MCF 10A (cell line): ENCODE measurements at regions of chr20 and their contacts with region 1.

Region 1: DNA sequence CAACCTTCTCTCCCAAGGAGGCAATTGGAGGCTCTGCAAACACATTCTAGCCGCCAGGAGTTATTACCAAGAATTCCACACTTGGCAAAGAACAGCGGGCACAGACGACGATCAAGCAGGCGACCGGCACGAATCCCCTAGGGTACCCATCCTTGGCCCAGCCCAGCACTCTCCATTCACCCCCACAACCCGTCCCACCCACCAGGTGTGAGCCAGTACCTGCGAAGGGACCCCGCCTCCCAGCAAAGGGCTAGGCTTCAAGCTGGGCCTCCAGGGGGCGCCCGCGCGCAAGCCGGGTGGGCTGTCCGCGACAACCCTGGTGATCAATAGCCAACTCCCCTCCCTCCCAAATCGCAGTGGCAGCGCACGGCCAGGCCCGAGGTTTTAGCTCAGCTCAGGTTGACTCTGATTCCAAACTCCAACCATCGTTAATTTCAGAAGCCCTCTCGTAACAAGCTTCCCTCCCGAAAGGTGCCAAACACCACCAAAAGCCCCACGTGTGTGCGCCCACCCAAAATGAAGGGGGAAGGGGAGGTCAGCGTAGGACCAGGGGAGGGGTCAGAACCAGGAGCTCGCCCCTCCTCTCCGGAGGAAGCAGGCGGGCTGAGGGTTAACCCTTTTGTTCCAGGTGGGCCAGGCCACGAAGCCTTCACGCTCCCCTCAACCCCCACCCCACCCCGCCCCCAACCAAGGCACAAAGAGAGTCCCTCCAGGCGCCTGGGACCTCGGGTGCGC is 2.1 kb downstream of the SALL4 start:
- DNase-seq: peak; percentile 59
- H3K4me3 Mint-ChIP-seq: peak overlapping the region; percentile 63
- H3K27ac Mint-ChIP-seq: no peak overlapping the region
- H3K4me1 Mint-ChIP-seq: no peaks in the 10 kb centered on the region
- H3K27me3 Mint-ChIP-seq: no peaks in the 10 kb centered on the region
- CTCF ChIP-seq: peak; percentile 82

Region 2: GRCh38 chr20:51687062-51687461 is 113.2 kb before region 1 on chr20:
- CTCF ChIA-PET with region 1: no interaction called
- POLR2A ChIA-PET with region 1: no interaction called
- intact Hi-C with region 1: no loop called
- DNase-seq: peak; percentile 55
- H3K4me3 Mint-ChIP-seq: no peak overlapping the region
- H3K27ac Mint-ChIP-seq: peak overlapping the region; percentile 92
- H3K4me1 Mint-ChIP-seq: peaks cover 11% of the 10 kb centered on the region
- H3K27me3 Mint-ChIP-seq: no peaks in the 10 kb centered on the region
- CTCF ChIP-seq: no peak

Region 3: DNA sequence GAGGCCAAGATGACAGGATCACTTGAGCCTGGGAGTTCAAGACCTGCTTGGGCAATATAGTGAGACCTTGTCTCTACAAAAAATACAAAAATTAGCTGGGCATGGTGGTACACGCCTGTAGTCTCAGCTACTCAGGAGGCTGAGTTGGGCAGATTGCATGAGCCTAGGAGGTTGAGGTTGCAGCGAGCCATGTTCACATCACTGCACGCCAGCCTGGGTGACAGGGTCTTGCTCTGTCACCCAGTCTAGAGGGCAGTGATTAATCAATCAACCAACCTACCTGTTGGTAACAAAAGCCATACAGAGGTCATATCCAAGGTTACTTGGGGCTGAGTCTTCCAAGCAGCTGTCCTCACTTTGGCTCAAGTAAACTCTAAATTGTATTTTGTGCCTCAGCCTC is 24.0 kb before region 1 on chr20:
- CTCF ChIA-PET with region 1: interaction called, 13 read pairs
- POLR2A ChIA-PET with region 1: no interaction called
- intact Hi-C with region 1: no loop called
- DNase-seq: no peak
- H3K4me3 Mint-ChIP-seq: no peak overlapping the region
- H3K27ac Mint-ChIP-seq: no peak overlapping the region
- H3K4me1 Mint-ChIP-seq: no peaks in the 10 kb centered on the region
- H3K27me3 Mint-ChIP-seq: no peaks in the 10 kb centered on the region
- CTCF ChIP-seq: no peak

Region 4: DNA sequence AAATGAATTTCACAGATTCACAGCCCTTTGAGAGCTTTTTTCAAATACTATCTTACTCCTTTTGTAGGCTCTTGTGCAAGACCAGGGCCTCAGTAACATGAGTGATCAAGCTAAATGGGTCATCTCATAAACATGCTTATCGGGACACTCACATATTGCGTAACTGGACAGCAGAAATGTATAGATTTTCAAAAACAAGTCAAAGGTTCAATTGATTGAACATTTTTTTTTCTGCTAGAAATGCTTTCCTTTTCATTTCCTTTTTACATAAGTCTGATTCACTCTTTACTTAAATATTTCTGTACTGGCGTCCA is 10.8 kb after region 1 on chr20:
- CTCF ChIA-PET with region 1: interaction called, 28 read pairs
- POLR2A ChIA-PET with region 1: interaction called, 3 read pairs
- intact Hi-C with region 1: no loop called
- DNase-seq: peak; percentile 35
- H3K4me3 Mint-ChIP-seq: no peak overlapping the region
- H3K27ac Mint-ChIP-seq: no peak overlapping the region
- H3K4me1 Mint-ChIP-seq: peaks cover 4% of the 10 kb centered on the region
- H3K27me3 Mint-ChIP-seq: no peaks in the 10 kb centered on the region
- CTCF ChIP-seq: no peak

Region 5: DNA sequence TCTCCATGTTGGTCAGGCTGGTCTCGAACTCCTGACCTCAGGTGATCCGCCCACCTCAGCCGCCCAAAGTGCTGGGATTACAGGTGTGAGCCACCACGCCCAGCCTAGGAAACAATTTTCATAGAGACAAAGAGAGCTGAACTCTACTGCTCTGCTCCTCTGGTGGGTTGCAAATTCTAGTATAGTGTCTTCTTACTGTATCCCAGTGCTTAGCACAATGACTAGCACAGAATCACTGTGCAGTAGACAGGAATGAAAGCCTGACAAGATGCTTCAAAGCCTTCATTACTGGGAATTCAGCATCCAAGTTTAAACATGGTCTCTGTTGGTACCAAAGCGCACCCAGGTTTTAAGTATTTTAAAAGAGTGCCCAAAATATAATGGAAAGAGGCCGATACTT is 98.6 kb after region 1 on chr20:
- CTCF ChIA-PET with region 1: no interaction called
- POLR2A ChIA-PET with region 1: no interaction called
- intact Hi-C with region 1: no loop called
- DNase-seq: no peak
- H3K4me3 Mint-ChIP-seq: no peak overlapping the region
- H3K27ac Mint-ChIP-seq: no peak overlapping the region
- H3K4me1 Mint-ChIP-seq: no peaks in the 10 kb centered on the region
- H3K27me3 Mint-ChIP-seq: no peaks in the 10 kb centered on the region
- CTCF ChIP-seq: no peak

Region 6: GRCh38 chr20:52060794-52061714 is 260.8 kb after region 1 on chr20:
- CTCF ChIA-PET with region 1: interaction called, 34 read pairs
- POLR2A ChIA-PET with region 1: interaction called, 3 read pairs
- intact Hi-C with region 1: loop called (anchors 5 kb)
- DNase-seq: peak; percentile 33
- H3K4me3 Mint-ChIP-seq: no peak overlapping the region
- H3K27ac Mint-ChIP-seq: no peak overlapping the region
- H3K4me1 Mint-ChIP-seq: peaks cover 9% of the 10 kb centered on the region
- H3K27me3 Mint-ChIP-seq: no peaks in the 10 kb centered on the region
- CTCF ChIP-seq: peak; percentile 32

Region 7: DNA sequence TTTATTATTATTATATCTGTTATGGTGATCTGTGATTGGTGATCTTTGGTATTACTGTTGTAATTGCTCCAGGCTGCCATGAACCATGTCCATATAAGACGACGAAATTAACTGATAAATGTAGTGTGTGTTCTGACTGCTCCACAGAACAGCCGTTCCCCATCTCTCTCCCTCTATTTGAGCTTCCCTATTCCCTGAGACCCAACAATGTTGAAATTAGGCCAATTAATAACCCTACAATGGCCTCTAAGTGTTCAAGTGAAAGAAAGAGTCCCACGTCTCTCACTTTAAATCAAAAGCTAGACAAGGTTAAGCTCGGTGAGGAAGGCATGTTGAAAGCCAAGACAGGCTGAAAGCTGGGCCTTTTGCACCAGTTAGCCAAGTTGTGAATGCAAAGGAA is 339.8 kb after region 1 on chr20:
- CTCF ChIA-PET with region 1: no interaction called
- POLR2A ChIA-PET with region 1: no interaction called
- intact Hi-C with region 1: no loop called
- DNase-seq: no peak
- H3K4me3 Mint-ChIP-seq: no peak overlapping the region
- H3K27ac Mint-ChIP-seq: no peak overlapping the region
- H3K4me1 Mint-ChIP-seq: no peaks in the 10 kb centered on the region
- H3K27me3 Mint-ChIP-seq: no peaks in the 10 kb centered on the region
- CTCF ChIP-seq: no peak